ENCODE measurements at regions of chrX and their contacts with region 1.

Region 1: GRCh38 chrX:1580735-1581531 is 10.5 kb upstream of the AKAP17A start:
- DNase-seq: peak; percentile 66
- H3K4me3 Mint-ChIP-seq: no peak overlapping the region
- H3K27ac Mint-ChIP-seq: no peak overlapping the region
- H3K4me1 Mint-ChIP-seq: peaks cover 19% of the 10 kb centered on the region
- H3K27me3 Mint-ChIP-seq: no peaks in the 10 kb centered on the region

Region 2: GRCh38 chrX:1323315-1323714 is 257.6 kb before region 1 on chrX:
- intact Hi-C with region 1: loop called (anchors 5 kb)
- DNase-seq: peak; percentile 45
- H3K4me3 Mint-ChIP-seq: no peak overlapping the region
- H3K27ac Mint-ChIP-seq: peak overlapping the region; percentile 55
- H3K4me1 Mint-ChIP-seq: peaks cover 12% of the 10 kb centered on the region
- H3K27me3 Mint-ChIP-seq: peaks cover 5% of the 10 kb centered on the region

Region 3: DNA sequence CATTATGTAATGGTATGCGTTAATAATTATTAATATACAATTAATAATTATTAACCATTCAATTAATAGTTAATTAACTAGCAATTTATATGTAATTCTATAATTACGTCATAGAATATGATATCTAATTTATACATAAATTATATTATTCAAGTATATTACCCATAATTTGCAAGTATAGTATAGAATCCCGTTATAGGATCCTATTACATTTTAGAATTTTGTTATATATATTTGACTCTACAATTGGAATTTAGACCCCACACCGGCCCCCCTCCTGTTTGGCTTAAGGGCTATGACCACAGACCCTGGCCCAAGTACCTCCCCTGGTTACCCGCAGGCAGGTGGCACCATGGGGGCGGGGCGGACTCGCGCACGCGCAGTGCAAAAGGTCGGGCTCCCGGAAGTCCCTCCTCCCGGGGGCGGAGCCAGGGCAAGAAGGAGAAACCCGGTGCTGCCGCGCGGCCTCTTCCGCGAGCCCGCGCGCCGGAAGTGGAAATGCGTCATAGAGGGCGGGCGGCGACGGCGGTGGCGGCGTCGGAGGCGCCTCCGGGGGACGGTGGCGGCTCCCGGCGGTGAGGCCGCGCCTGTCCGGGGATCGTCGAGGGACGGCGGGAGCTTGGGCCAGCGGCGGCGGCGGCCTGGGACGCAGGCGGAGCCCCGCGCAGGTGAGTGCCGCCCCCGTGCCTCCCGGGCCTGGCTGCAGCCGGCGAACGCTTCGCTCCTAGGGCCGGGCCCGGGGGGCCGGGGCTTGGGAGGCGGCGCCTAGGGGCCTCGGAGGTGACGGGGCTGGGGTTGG is 10.4 kb after region 1 on chrX and contains the start of gene AKAP17A:
- intact Hi-C with region 1: loop called (anchors 1 kb)
- DNase-seq: peak; percentile 99
- H3K4me3 Mint-ChIP-seq: peak within 1 kb of the TSS; percentile 95
- H3K27ac Mint-ChIP-seq: peak within 1 kb of the TSS; percentile 93
- H3K4me1 Mint-ChIP-seq: peaks cover 10% of the 10 kb centered on the region
- H3K27me3 Mint-ChIP-seq: no peaks in the 10 kb centered on the region
- total RNA-seq, gene AKAP17A: 63.9 and 66.1 TPM in 2 replicates

Measured in activated T-helper 1 cell treated with anti-CD3 and anti-CD28 coated beads, Interleukin-12 subunit alpha, Interleukin-12 subunit beta, Interleukin-2, Interleukin-4 antibody, amounts not matched to agents 30 ng/mL and 10 ng/mL and 1 ng/mL, durations not matched to agents 14 hours and 24 hours and 36 hours (primary cell).